ENCODE measurements at regions of chr22 and their contacts with region 1.

Region 1: GRCh38 chr22:29245637-29246385 is 22.0 kb downstream of the RHBDD3 start:
- DNase-seq: peak; percentile 56
- ATAC-seq: peak; percentile 99
- H3K4me3 Mint-ChIP-seq: no peak overlapping the region
- H3K27ac Mint-ChIP-seq: no peak overlapping the region
- H3K4me1 Mint-ChIP-seq: no peaks in the 10 kb centered on the region
- H3K27me3 Mint-ChIP-seq: peaks cover 20% of the 10 kb centered on the region
- CTCF ChIP-seq: peak; percentile 88

Region 2: GRCh38 chr22:28855355-28856094 is 390.3 kb before region 1 on chr22:
- CTCF ChIA-PET with region 1: interaction called, 29 read pairs
- POLR2A ChIA-PET with region 1: no interaction called
- intact Hi-C with region 1: loop called (anchors 1 kb)
- DNase-seq: no peak
- ATAC-seq: peak; percentile 57
- H3K4me3 Mint-ChIP-seq: no peak overlapping the region
- H3K27ac Mint-ChIP-seq: no peak overlapping the region
- H3K4me1 Mint-ChIP-seq: no peaks in the 10 kb centered on the region
- H3K27me3 Mint-ChIP-seq: peaks cover 6% of the 10 kb centered on the region
- CTCF ChIP-seq: no peak

Region 3: DNA sequence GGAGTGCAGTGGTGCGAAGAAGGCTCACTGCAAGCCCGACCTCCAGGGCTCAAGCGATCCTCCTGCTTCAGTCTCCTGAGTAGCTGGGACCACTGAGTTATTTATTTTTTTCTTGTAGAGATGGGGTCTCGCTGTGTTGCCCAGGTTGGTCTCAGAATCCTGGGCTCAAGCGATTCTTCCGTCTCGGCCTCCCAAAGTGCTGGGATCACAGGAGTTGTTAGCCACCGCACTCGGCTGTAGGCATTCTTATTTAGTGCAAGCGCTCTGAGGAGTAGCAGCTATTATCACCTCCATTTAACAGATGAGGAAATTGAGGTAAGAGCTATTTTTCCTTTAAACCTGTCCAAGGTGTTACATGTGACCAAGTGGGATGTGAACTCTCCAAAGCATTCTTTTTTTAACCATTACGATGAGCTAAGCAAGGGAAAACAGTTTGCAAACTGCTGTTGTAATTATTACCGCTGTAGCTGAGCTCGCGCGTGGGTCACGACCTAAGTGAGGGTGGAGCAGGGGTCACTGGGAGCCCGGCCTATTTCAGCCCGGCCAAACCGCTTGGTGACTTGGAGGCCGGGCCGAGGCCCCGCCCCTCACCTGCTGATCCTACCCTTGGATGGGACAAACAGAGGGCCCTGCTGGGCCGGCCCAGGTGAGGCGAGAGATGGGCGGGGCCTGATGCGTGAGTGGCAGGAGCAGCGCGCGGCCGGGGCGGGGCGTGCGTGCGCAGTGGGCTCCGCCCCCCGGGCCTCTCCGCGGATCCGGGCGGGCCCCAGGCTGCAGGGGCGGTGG is 173.4 kb before region 1 on chr22:
- CTCF ChIA-PET with region 1: no interaction called
- POLR2A ChIA-PET with region 1: no interaction called
- intact Hi-C with region 1: loop called (anchors 10 kb)
- DNase-seq: peak; percentile 76
- ATAC-seq: peak; percentile 99
- H3K4me3 Mint-ChIP-seq: peak overlapping the region; percentile 72
- H3K27ac Mint-ChIP-seq: no peak overlapping the region
- H3K4me1 Mint-ChIP-seq: peaks cover 25% of the 10 kb centered on the region
- H3K27me3 Mint-ChIP-seq: peaks cover 59% of the 10 kb centered on the region
- CTCF ChIP-seq: no peak

Region 4: DNA sequence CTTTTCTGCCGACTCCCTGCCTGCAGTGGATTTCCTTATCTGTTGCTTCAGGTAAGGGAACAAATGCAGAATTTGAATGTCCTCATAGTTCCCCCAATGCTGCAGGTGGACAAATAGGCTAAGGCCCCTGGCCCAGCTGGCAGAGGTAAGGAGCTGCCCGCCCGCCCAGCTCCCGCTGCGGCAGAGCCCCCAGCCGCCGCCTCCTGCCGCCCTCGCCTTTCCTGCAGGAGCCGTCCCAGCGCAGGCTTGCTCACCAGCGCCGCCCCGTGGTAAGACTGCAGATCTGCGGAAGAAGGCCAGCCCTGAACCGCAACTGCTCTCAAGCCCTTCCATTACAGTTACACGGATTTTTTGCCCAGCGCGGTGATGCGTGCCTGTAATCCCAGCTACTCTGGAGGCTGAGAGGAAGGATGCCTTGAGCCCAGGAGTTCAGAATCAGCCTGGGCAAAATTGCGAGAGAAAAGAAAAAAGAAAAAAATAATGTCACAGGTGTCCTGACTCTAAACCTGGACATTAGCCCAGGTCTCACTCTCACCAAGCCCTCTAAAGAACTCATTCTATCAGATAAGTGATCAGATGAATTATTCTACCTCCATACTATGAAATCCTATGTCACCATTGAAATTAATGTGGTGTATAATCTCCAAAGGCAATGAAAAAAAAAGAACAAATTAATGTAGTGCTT is 91.3 kb before region 1 on chr22:
- CTCF ChIA-PET with region 1: interaction called, 6 read pairs
- POLR2A ChIA-PET with region 1: no interaction called
- intact Hi-C with region 1: loop called (anchors 1 kb)
- DNase-seq: peak; percentile 37
- ATAC-seq: peak; percentile 40
- H3K4me3 Mint-ChIP-seq: no peak overlapping the region
- H3K27ac Mint-ChIP-seq: no peak overlapping the region
- H3K4me1 Mint-ChIP-seq: peaks cover 6% of the 10 kb centered on the region
- H3K27me3 Mint-ChIP-seq: peaks cover 58% of the 10 kb centered on the region
- CTCF ChIP-seq: no peak

Region 5: DNA sequence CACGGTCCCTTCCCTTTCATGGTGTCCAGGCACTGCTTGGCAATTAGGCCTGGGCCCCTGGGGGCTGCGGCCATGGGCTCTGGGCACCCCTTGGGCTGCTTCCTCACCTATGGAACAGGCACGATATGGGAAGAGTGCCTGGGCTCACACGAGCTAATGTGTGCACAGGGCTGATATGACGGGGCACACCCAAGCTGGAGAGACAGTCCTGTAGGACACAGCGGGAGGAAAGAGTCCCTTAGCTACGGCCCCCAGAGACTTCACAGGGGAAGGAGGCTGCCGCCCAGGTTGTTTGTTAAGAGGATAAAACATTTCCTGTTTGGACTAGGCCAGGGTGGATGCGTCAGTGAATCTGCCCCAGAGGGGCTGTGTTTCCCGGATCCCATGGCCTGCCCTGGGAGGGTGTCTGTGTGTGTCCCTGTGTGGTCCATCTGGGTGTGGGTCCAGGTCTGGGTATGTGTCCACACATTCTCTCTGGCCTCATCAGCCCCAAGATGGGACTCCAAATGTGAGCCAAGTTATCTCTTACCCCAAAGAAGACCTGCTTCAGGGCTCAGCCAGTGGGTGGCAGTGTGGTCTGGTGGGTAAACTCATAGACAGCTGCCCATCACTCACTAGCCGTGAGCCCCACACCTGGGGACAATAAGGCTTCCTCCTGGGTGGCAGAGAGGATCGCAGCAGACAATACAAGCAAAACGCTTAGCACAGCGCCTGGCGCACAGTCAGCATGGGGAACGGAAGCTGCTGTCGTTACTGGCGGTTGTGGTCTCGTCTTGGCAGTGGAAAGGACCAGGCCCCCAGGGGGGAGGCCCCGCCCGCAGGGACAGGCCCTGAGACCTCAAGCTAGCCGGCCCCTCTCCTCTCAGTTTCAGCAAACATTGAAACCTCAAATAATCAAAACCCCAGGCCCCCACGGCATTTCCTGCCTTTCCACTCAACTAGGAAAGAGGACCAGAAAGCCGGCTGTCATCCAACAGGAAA is 43.3 kb before region 1 on chr22:
- CTCF ChIA-PET with region 1: interaction called, 7 read pairs
- POLR2A ChIA-PET with region 1: no interaction called
- intact Hi-C with region 1: loop called (anchors 5 kb)
- DNase-seq: no peak
- ATAC-seq: peak; percentile 79
- H3K4me3 Mint-ChIP-seq: no peak overlapping the region
- H3K27ac Mint-ChIP-seq: no peak overlapping the region
- H3K4me1 Mint-ChIP-seq: peaks cover 17% of the 10 kb centered on the region
- H3K27me3 Mint-ChIP-seq: peaks cover 56% of the 10 kb centered on the region
- CTCF ChIP-seq: no peak

Measured in activated B cell treated with CpG ODN at 0.5 μM for 24 hours (primary cell).